ENCODE measurements at regions of chr2 and their contacts with region 1.

Region 1: GRCh38 chr2:218852911-218853667 is 6.5 kb upstream of the WNT6 start:
- DNase-seq: peak; percentile 67
- H3K4me3 ChIP-seq: no peak overlapping the region
- H3K27ac ChIP-seq: no peak overlapping the region
- H3K4me1 ChIP-seq: no peaks in the 10 kb centered on the region
- CTCF ChIP-seq: peak; percentile 91

Region 2: GRCh38 chr2:218438601-218438995 is 414.5 kb before region 1 on chr2:
- CTCF ChIA-PET with region 1: no interaction called
- POLR2A ChIA-PET with region 1: no interaction called
- intact Hi-C with region 1: loop called (anchors 10 kb)
- DNase-seq: peak; percentile 25
- H3K4me3 ChIP-seq: no peak overlapping the region
- H3K27ac ChIP-seq: no peak overlapping the region
- H3K4me1 ChIP-seq: peaks cover 9% of the 10 kb centered on the region
- CTCF ChIP-seq: no peak

Region 3: GRCh38 chr2:218898109-218898878 is 45.2 kb after region 1 on chr2:
- CTCF ChIA-PET with region 1: no interaction called
- POLR2A ChIA-PET with region 1: no interaction called
- intact Hi-C with region 1: loop called (anchors 1 kb)
- DNase-seq: peak; percentile 76
- H3K4me3 ChIP-seq: no peak overlapping the region
- H3K27ac ChIP-seq: no peak overlapping the region
- H3K4me1 ChIP-seq: peaks cover 55% of the 10 kb centered on the region
- CTCF ChIP-seq: peak; percentile 94

Region 4: GRCh38 chr2:218959141-218959731 is 106.1 kb after region 1 on chr2 and contains the start of gene CDK5R2:
- CTCF ChIA-PET with region 1: no interaction called
- POLR2A ChIA-PET with region 1: no interaction called
- intact Hi-C with region 1: no loop called
- DNase-seq: peak; percentile 95
- H3K4me3 ChIP-seq: peak within 1 kb of the TSS; percentile 72
- H3K27ac ChIP-seq: no peak within 1 kb of the TSS
- H3K4me1 ChIP-seq: peaks cover 6% of the 10 kb centered on the region
- CTCF ChIP-seq: no peak
- total RNA-seq, gene CDK5R2: 0.09 and 0.41 TPM in 2 replicates

Region 5: GRCh38 chr2:218979846-218980734 is 127.0 kb after region 1 on chr2:
- CTCF ChIA-PET with region 1: no interaction called
- POLR2A ChIA-PET with region 1: no interaction called
- intact Hi-C with region 1: loop called (anchors 2 kb)
- DNase-seq: peak; percentile 74
- H3K4me3 ChIP-seq: peak overlapping the region; percentile 38
- H3K27ac ChIP-seq: no peak overlapping the region
- H3K4me1 ChIP-seq: no peaks in the 10 kb centered on the region
- CTCF ChIP-seq: peak; percentile 99

Region 6: GRCh38 chr2:218995972-218996711 is 143.1 kb after region 1 on chr2:
- CTCF ChIA-PET with region 1: no interaction called
- POLR2A ChIA-PET with region 1: no interaction called
- intact Hi-C with region 1: loop called (anchors 5 kb)
- DNase-seq: peak; percentile 54
- H3K4me3 ChIP-seq: no peak overlapping the region
- H3K27ac ChIP-seq: no peak overlapping the region
- H3K4me1 ChIP-seq: no peaks in the 10 kb centered on the region
- CTCF ChIP-seq: peak; percentile 85